Activated CD8-positive, alpha-beta T cell treated with anti-CD3 and anti-CD28 coated beads for 36 hours (primary cell): ENCODE measurements at regions of chr3 and their contacts with region 1.

Region 1: GRCh38 chr3:171162986-171163723 is 136.6 kb upstream of the SLC2A2 start:
- DNase-seq: peak; percentile 20
- ATAC-seq: peak; percentile 42
- H3K4me3 Mint-ChIP-seq: no peak overlapping the region
- H3K27ac Mint-ChIP-seq: no peak overlapping the region
- H3K4me1 Mint-ChIP-seq: peaks cover 25% of the 10 kb centered on the region
- H3K27me3 Mint-ChIP-seq: no peaks in the 10 kb centered on the region
- CTCF ChIP-seq: peak; percentile 93

Region 2: DNA sequence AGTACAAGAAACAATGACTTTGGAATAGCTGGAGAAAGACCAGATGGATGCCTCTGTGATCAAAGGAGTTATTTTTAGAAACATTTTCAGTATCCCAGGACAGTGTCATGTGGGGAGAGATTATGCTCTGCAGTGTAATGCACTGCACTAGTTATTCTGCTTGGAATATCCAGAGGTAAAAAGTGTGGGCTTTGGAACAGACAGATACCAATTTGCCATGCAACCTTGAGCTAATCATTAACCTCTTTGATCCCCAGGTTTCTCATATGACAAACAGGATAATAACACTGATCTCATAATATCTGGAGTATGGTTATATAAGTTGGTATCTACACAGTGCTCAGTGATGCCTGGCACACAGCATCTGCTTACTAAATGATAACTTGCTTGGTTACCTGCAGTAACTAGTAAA is 565.1 kb before region 1 on chr3:
- CTCF ChIA-PET with region 1: no interaction called
- POLR2A ChIA-PET with region 1: no interaction called
- intact Hi-C with region 1: no loop called
- DNase-seq: no peak
- ATAC-seq: no peak
- H3K4me3 Mint-ChIP-seq: no peak overlapping the region
- H3K27ac Mint-ChIP-seq: no peak overlapping the region
- H3K4me1 Mint-ChIP-seq: no peaks in the 10 kb centered on the region
- H3K27me3 Mint-ChIP-seq: peaks cover 15% of the 10 kb centered on the region
- CTCF ChIP-seq: no peak

Region 3: DNA sequence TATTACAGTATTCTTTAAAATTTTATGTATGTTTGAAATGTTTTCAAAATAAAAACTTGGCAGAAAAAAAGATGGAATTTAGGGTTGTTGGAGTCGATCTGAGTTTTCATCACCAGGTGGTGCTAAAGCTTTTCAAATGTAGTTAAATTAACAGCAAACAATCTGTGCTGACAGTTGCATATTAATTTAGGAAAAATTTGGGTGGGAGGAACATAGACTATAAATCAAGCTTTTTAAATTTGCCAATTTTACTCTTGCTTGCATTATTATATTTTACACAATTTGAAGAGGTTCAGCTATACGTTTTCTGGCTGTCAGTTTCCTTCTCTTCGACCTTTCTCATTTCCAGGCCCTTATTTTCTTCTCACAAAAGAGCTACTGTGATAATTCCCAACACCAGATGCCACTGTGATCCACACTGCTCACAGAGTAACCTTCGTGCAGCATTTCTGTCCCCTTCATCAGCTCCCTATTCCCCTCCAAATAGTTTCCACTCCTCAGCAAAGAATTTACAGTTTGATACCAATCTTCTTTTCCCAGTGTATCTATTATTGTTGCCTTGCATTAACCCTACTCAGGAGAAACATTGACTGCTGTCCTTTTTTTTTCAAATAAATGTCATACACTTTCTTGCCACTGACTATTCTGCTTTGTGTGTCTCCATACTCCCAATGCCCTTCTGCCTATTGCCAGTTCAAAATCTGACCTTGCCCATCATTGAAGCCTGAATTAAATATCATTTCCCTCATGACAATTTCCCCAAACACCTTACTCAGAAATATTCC is 201.3 kb before region 1 on chr3:
- CTCF ChIA-PET with region 1: interaction called, 10 read pairs
- POLR2A ChIA-PET with region 1: no interaction called
- intact Hi-C with region 1: no loop called
- DNase-seq: peak; percentile 16
- ATAC-seq: no peak
- H3K4me3 Mint-ChIP-seq: no peak overlapping the region
- H3K27ac Mint-ChIP-seq: no peak overlapping the region
- H3K4me1 Mint-ChIP-seq: no peaks in the 10 kb centered on the region
- H3K27me3 Mint-ChIP-seq: peaks cover 1% of the 10 kb centered on the region
- CTCF ChIP-seq: peak; percentile 76

Region 4: GRCh38 chr3:171561596-171562323 is 398.6 kb after region 1 on chr3:
- CTCF ChIA-PET with region 1: interaction called, 37 read pairs
- POLR2A ChIA-PET with region 1: no interaction called
- intact Hi-C with region 1: loop called (anchors 2 kb)
- DNase-seq: peak; percentile 19
- ATAC-seq: peak; percentile 70
- H3K4me3 Mint-ChIP-seq: peak overlapping the region; percentile 21
- H3K27ac Mint-ChIP-seq: peak overlapping the region; percentile 92
- H3K4me1 Mint-ChIP-seq: peaks cover 20% of the 10 kb centered on the region
- H3K27me3 Mint-ChIP-seq: no peaks in the 10 kb centered on the region
- CTCF ChIP-seq: no peak